Activated CD4-positive, alpha-beta T cell treated with anti-CD3 and anti-CD28 coated beads, Interleukin-2, amount 10 ng/mL, durations not matched to agents 24 days and 14 days (primary cell): ENCODE measurements at regions of chr7 and their contacts with region 1.

Region 1: GRCh38 chr7:92875719-92876118 is 39.3 kb upstream of the CDK6 start:
- DNase-seq: peak; percentile 56
- H3K4me3 Mint-ChIP-seq: no peak overlapping the region
- H3K27ac Mint-ChIP-seq: peak overlapping the region; percentile 62
- H3K4me1 Mint-ChIP-seq: peaks cover 39% of the 10 kb centered on the region
- H3K27me3 Mint-ChIP-seq: no peaks in the 10 kb centered on the region

Region 2: DNA sequence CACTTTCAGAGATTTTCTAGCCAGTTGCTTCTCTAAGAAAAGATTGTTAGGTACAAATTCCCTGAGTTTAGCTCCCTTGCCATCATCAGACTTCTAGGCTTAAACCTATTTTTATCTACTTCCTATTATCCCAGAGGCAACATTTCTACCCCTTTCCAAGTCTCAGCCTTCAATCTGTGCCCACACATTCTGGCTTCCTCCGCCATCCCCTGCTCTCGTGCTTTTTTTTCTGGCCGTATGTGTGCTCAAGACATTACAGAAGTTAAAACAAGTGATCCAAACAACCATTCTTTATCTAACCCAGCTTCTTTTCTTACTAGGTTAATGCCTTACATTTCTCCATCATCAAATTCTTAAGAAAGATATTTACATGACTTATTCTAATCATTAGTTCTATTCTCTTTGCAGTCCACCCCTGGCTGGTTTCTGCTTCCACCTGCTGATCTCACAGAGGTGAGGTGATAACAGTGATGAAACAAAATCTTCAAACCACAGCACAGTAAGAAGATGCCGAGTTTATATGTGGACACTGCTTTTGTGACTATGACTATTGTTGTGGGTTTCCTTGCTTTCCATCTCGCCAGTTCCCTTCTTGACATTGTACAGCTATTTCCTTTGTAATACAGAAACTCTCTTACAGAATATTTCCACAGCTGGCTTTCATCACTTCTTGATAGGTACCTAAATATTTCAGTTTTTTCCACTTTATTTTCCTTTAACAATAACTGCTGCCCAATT is 21.0 kb before region 1 on chr7:
- intact Hi-C with region 1: loop called (anchors 1 kb)
- DNase-seq: peak; percentile 68
- H3K4me3 Mint-ChIP-seq: peak overlapping the region; percentile 51
- H3K27ac Mint-ChIP-seq: peak overlapping the region; percentile 85
- H3K4me1 Mint-ChIP-seq: peaks cover 16% of the 10 kb centered on the region
- H3K27me3 Mint-ChIP-seq: no peaks in the 10 kb centered on the region

Region 3: DNA sequence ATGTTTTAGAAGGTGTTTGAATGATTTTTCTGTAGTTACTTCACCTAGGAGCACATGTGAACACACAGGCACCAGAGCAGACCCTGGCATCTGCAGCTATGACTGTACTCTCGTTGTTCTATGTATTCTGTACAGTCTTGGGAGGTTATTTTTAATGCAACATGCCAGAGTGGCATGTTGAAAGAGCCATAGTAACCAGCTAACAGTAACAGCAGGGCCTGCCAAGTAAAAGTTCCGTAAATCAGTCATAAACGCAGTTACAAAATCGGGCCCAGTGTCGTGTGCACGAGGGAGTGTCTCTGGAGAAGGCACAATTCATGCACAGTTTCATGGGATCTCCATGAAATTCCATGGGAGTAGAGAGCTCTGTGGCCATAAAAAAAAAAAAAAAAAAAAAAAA is 68.9 kb after region 1 on chr7:
- intact Hi-C with region 1: no loop called
- DNase-seq: no peak
- H3K4me3 Mint-ChIP-seq: no peak overlapping the region
- H3K27ac Mint-ChIP-seq: no peak overlapping the region
- H3K4me1 Mint-ChIP-seq: no peaks in the 10 kb centered on the region
- H3K27me3 Mint-ChIP-seq: no peaks in the 10 kb centered on the region